K562 (cell line): ENCODE measurements at regions of chr3 and their contacts with region 1.

Region 1: GRCh38 chr3:3998140-3998922 is 199.1 kb downstream of the LRRN1 start:
- DNase-seq: peak; percentile 16 to 65 (median 28)
- ATAC-seq: peak; percentile 82
- H3K4me3 ChIP-seq: no peak overlapping the region
- H3K27ac ChIP-seq: no peak overlapping the region
- H3K4me1 ChIP-seq: no peaks in the 10 kb centered on the region
- H3K27me3 ChIP-seq: no peaks in the 10 kb centered on the region
- CTCF ChIP-seq: peak; percentile 45 to 63 (median 59)
- EP300 ChIP-seq: no peak
- POLR2A ChIP-seq: no peak
- RAD21 ChIP-seq: peak; percentile 75 to 76

Region 2: GRCh38 chr3:3191675-3192285 is 806.6 kb before region 1 on chr3:
- CTCF ChIA-PET with region 1: no interaction called
- POLR2A ChIA-PET with region 1: no interaction called
- in situ Hi-C with region 1: no loop called
- intact Hi-C with region 1: loop called (anchors 2 kb)
- DNase-seq: peak; percentile 46 to 86 (median 63)
- ATAC-seq: peak; percentile 82
- H3K4me3 ChIP-seq: no peak overlapping the region
- H3K27ac ChIP-seq: peak overlapping the region; percentile 27
- H3K4me1 ChIP-seq: peaks cover 0 to 43% of the 10 kb centered on the region in 2 experiments; a peak in 3 of 5 replicates
- H3K27me3 ChIP-seq: no peaks in the 10 kb centered on the region
- CTCF ChIP-seq: no peak
- EP300 ChIP-seq: peak; percentile 70; the same call in 1 of the 2 replicates
- POLR2A ChIP-seq: no peak
- RAD21 ChIP-seq: no peak

Region 3: GRCh38 chr3:3200632-3201212 is 797.6 kb before region 1 on chr3:
- CTCF ChIA-PET with region 1: interaction called, 3 read pairs
- POLR2A ChIA-PET with region 1: no interaction called
- in situ Hi-C with region 1: no loop called
- intact Hi-C with region 1: loop called (anchors 1 kb)
- DNase-seq: peak; percentile 19 to 71 (median 44)
- ATAC-seq: peak; percentile 85
- H3K4me3 ChIP-seq: no peak overlapping the region
- H3K27ac ChIP-seq: no peak overlapping the region
- H3K4me1 ChIP-seq: peaks cover 0 to 13% of the 10 kb centered on the region in 2 experiments; a peak in 3 of 5 replicates
- H3K27me3 ChIP-seq: no peaks in the 10 kb centered on the region
- CTCF ChIP-seq: peak; percentile 64 to 88 (median 76)
- EP300 ChIP-seq: no peak
- POLR2A ChIP-seq: no peak
- RAD21 ChIP-seq: peak; percentile 93 to 96

Region 4: DNA sequence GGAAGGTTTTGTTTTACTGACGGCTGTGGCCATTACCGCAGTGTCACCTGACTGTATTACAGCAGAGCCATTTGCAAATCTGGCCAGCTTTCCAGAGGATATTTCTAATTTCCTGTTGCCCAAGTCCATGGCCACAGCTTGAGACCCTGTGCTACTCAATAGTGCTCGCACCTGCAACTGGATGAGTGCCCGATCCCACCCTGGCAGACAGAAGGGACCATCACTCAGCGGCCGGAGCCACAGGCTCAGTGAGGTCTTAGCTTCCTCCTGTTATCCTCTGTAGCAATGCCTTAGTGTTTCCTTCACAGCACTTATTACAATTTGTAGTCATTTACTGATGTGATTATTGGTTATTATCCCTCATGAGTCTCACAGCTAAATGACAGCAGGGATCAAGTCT is 14.3 kb before region 1 on chr3:
- CTCF ChIA-PET with region 1: no interaction called
- POLR2A ChIA-PET with region 1: no interaction called
- in situ Hi-C with region 1: no loop called
- intact Hi-C with region 1: no loop called
- DNase-seq: no peak
- ATAC-seq: no peak
- H3K4me3 ChIP-seq: no peak overlapping the region
- H3K27ac ChIP-seq: no peak overlapping the region
- H3K4me1 ChIP-seq: no peaks in the 10 kb centered on the region
- H3K27me3 ChIP-seq: no peaks in the 10 kb centered on the region
- CTCF ChIP-seq: no peak
- EP300 ChIP-seq: no peak
- POLR2A ChIP-seq: no peak
- RAD21 ChIP-seq: no peak

Region 5: DNA sequence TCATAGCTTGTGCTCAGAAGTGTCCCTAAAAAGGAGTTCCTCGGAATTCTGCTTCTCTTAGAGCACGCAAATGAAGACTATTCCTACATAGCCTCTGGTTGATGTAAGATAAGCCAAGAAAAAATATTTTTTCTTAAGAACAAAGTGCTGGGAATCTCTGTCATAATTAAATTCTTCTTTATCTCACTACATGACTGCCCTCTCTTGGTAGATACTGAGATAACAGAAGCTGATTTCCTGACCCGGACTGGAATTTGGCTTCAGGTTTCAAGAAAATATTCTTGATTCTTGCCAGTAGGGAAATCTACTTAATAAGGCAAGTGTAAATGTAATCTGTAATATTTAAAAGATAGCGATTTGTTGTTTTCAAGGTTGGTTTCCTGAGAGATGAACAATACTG is 273.5 kb after region 1 on chr3:
- CTCF ChIA-PET with region 1: no interaction called
- POLR2A ChIA-PET with region 1: interaction called, 3 read pairs
- in situ Hi-C with region 1: no loop called
- intact Hi-C with region 1: loop called (anchors 5 kb)
- DNase-seq: peak; percentile 39 to 44 (median 40)
- ATAC-seq: peak; percentile 76
- H3K4me3 ChIP-seq: no peak overlapping the region
- H3K27ac ChIP-seq: no peak overlapping the region
- H3K4me1 ChIP-seq: no peaks in the 10 kb centered on the region
- H3K27me3 ChIP-seq: 0 out of 5 replicates have a peak, but pooled peaks cover 0 to 3% of the 10 kb centered on the region in 2 experiments
- CTCF ChIP-seq: peak; percentile 25 to 73 (median 56); a peak in 5 of 6 replicates
- EP300 ChIP-seq: no peak
- POLR2A ChIP-seq: no peak
- RAD21 ChIP-seq: peak; percentile 88 to 89

Region 6: DNA sequence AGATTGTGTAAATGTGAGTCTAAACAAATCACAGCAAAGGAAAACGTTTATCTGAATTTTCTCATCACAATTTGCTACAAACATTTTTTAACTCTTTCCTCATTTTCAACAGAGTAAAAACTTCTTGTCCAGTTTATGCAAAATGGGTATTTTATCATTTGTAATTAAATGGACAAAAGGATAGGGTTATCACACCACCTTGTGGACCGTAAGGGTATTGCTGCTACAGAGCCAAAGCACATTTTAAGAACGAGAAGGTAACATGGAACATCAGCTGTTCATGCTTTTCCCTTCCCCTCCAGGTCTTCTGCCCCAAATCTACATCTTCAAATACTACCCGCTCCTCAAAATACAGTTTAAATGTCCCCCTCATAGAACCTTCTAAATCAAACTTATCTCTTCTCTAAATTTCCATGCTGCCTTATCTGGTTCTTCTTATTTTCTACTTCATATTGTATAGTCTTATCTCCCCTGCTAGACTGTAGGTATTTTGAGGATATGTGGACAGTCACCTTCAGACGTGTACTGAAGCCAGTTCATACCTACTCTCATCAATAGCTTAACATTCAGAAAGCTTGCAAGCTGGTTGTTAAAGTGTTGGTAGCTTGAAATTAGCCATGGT is 292.1 kb after region 1 on chr3:
- CTCF ChIA-PET with region 1: no interaction called
- POLR2A ChIA-PET with region 1: no interaction called
- in situ Hi-C with region 1: no loop called
- intact Hi-C with region 1: loop called (anchors 1 kb)
- DNase-seq: peak; percentile 62 to 76 (median 69)
- ATAC-seq: peak; percentile 84
- H3K4me3 ChIP-seq: no peak overlapping the region
- H3K27ac ChIP-seq: no peak overlapping the region
- H3K4me1 ChIP-seq: no peaks in the 10 kb centered on the region
- H3K27me3 ChIP-seq: no peaks in the 10 kb centered on the region; a peak in 1 of 5 replicates
- CTCF ChIP-seq: peak; percentile 68 to 91 (median 86)
- EP300 ChIP-seq: no peak
- POLR2A ChIP-seq: no peak
- RAD21 ChIP-seq: peak; percentile 96 to 97